ENCODE measurements at regions of chr12 and their contacts with region 1.

Region 1: GRCh38 chr12:69330475-69331473 is 17.4 kb upstream of the LYZ start:
- DNase-seq: peak; percentile 28 to 83 (median 76)
- ATAC-seq: peak; percentile 78
- H3K4me3 ChIP-seq: peak overlapping the region; percentile 83
- H3K4me3 Mint-ChIP-seq: peak overlapping the region; percentile 75 to 97 (median 96)
- H3K27ac ChIP-seq: peak overlapping the region; percentile 92
- H3K27ac Mint-ChIP-seq: peak overlapping the region; percentile 91 to 99 (median 96)
- H3K4me1 ChIP-seq: peaks cover 20 to 51% of the 10 kb centered on the region in 2 donors
- H3K4me1 Mint-ChIP-seq: peaks cover 10 to 76% (median 71%) of the 10 kb centered on the region in 7 donors
- H3K27me3 ChIP-seq: no peaks in the 10 kb centered on the region
- H3K27me3 Mint-ChIP-seq: peaks cover 0 to 20% (median 0%) of the 10 kb centered on the region in 5 donors

Region 2: DNA sequence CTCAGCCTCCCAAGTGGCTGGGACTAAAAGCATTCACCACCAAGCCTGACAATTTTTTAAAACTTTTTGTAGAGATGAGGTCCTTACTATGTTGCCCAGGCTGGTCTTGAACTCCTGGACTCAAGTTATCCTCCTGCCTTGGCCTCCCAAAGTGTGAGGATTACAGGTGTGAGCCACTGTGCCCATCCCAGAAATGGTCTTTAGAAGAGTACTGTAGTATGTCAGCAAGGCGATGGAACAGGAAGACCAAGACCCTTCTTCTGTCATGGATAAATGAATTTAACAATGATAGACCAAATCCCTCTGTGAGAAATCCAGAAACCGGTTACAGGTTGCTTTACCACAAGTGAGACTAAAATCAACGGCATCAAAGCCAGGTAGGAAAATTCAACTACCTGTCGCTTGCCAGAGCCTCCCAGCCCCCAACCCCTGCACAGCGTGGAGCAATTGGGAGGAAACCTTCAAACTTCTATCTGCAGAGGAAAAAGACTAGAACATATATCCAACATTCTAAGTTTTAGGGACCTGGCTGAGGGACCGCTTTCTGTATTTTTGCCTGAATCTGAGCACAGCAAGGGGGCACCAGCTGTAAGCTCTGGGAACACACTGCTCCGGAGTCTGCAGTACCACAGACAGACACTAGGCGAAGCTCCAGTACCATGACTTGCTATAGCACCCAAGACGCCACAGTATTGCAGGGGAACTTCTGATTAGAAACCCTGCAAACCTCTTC is 40.1 kb before region 1 on chr12:
- CTCF ChIA-PET with region 1: interaction called, 7 read pairs
- POLR2A ChIA-PET with region 1: interaction called, 10 read pairs
- intact Hi-C with region 1: loop called (anchors 1 to 2 kb)
- DNase-seq: peak; percentile 57 to 82 (median 75)
- ATAC-seq: peak; percentile 100
- H3K4me3 ChIP-seq: no peak overlapping the region
- H3K4me3 Mint-ChIP-seq: peak overlapping the region in 2 of 10 donors; percentile 14 to 37
- H3K27ac ChIP-seq: no peak overlapping the region
- H3K27ac Mint-ChIP-seq: peak overlapping the region in 1 of 9 donors; percentile 59
- H3K4me1 ChIP-seq: peaks cover 8% of the 10 kb centered on the region in 2 donors
- H3K4me1 Mint-ChIP-seq: peaks cover 6 to 36% (median 22%) of the 10 kb centered on the region in 7 donors
- H3K27me3 ChIP-seq: no peaks in the 10 kb centered on the region
- H3K27me3 Mint-ChIP-seq: peaks cover 0 to 49% (median 18%) of the 10 kb centered on the region in 5 donors

Region 3: GRCh38 chr12:69341328-69341727 is 10.6 kb after region 1 on chr12:
- CTCF ChIA-PET with region 1: interaction called, 4 read pairs
- POLR2A ChIA-PET with region 1: interaction called, 36 read pairs
- intact Hi-C with region 1: no loop called
- DNase-seq: no peak
- ATAC-seq: peak; percentile 79
- H3K4me3 ChIP-seq: no peak overlapping the region
- H3K4me3 Mint-ChIP-seq: no peak overlapping the region
- H3K27ac ChIP-seq: no peak overlapping the region
- H3K27ac Mint-ChIP-seq: no peak overlapping the region
- H3K4me1 ChIP-seq: no peaks in the 10 kb centered on the region
- H3K4me1 Mint-ChIP-seq: peaks cover 0 to 14% (median 2%) of the 10 kb centered on the region in 7 donors
- H3K27me3 ChIP-seq: no peaks in the 10 kb centered on the region
- H3K27me3 Mint-ChIP-seq: peaks cover 0 to 13% (median 7%) of the 10 kb centered on the region in 5 donors

Region 4: GRCh38 chr12:69348162-69348938 is 17.6 kb after region 1 on chr12 and contains the start of gene LYZ:
- CTCF ChIA-PET with region 1: interaction called, 4 read pairs
- POLR2A ChIA-PET with region 1: interaction called, 36 read pairs
- intact Hi-C with region 1: no loop called
- DNase-seq: no peak
- ATAC-seq: peak; percentile 89
- H3K4me3 ChIP-seq: no peak within 1 kb of the TSS
- H3K4me3 Mint-ChIP-seq: no peak within 1 kb of the TSS
- H3K27ac ChIP-seq: no peak within 1 kb of the TSS
- H3K27ac Mint-ChIP-seq: peak within 1 kb of the TSS in 1 of 9 donors; percentile 10
- H3K4me1 ChIP-seq: peaks cover 0 to 3% of the 10 kb centered on the region in 2 donors
- H3K4me1 Mint-ChIP-seq: peaks cover 0 to 7% (median 6%) of the 10 kb centered on the region in 7 donors
- H3K27me3 ChIP-seq: no peaks in the 10 kb centered on the region
- H3K27me3 Mint-ChIP-seq: peaks cover 0 to 17% (median 0%) of the 10 kb centered on the region in 5 donors
- total RNA-seq, gene LYZ: 1.1 to 2,445 (median 48.5) TPM

Region 5: DNA sequence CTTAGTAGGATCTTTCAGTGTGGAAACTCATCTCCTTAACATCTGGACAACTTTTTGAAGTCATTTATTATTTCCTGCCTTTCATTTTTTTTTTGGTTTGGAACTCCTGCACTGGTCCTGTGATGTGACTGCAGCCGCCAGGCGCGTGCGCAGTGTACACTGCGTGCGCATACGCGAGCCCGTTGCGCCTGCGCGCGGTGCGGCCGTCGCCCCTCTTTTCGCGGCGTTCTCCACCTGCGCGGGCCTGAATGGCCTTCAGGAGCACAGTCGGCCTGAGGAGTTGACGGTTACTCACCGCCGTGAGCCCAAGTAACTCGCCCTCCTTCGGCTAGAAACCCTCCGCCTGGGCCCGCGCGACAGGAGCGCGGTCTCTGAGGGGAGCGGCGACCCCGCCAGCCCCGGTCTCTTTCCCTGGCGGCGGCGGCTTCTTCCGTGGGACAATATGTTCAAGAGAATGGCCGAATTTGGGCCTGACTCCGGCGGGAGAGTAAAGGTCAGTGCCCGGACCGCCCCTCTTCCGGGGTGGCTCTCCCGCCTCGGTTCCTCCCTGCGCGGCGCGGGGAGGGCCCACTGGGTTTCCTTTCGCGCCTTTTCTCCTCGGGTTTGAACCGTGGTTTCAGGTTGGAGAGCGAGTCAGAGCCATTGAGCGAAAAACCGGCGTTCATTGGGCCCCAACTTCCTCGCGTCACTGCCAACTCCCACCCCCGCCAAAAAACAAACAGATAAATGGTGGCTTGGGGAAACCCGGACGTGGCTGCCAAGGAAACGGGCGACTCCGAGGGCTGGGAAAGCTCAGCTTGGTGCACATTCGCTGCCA is 29.0 kb after region 1 on chr12 and contains the start of gene YEATS4:
- CTCF ChIA-PET with region 1: interaction called, 14 read pairs
- POLR2A ChIA-PET with region 1: interaction called, 61 read pairs
- intact Hi-C with region 1: loop called in 1 of 2 experiments (anchors 1 kb)
- DNase-seq: peak; percentile 73 to 93 (median 84)
- ATAC-seq: peak; percentile 86
- H3K4me3 ChIP-seq: peak within 1 kb of the TSS; percentile 76
- H3K4me3 Mint-ChIP-seq: peak within 1 kb of the TSS; percentile 82 to 93 (median 89)
- H3K27ac ChIP-seq: peak within 1 kb of the TSS; percentile 93
- H3K27ac Mint-ChIP-seq: peak within 1 kb of the TSS; percentile 80 to 96 (median 91)
- H3K4me1 ChIP-seq: peaks cover 5 to 6% of the 10 kb centered on the region in 2 donors
- H3K4me1 Mint-ChIP-seq: peaks cover 11 to 32% (median 25%) of the 10 kb centered on the region in 7 donors
- H3K27me3 ChIP-seq: no peaks in the 10 kb centered on the region
- H3K27me3 Mint-ChIP-seq: peaks cover 0 to 3% (median 0%) of the 10 kb centered on the region in 5 donors
- total RNA-seq, gene YEATS4: 16.5 to 34.9 (median 21.4) TPM

Region 6: DNA sequence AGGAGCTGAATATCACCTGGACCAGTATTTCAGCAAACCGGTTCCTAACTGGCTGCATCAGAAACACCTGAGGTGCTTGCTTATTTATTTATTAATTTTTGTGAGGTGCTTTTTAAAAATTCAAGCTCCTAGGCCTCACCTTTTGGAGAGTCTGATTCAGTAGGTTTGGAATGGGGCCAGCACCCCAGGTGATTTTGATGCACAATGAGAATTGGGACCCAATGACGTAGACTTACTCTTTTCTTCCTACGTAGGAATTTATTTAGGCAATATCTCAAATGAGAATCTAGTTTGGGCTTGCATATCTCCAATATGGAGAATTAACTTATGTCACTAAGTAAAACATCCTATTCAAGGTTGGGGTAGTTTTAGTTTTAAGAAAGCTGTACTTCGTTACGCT is 36.0 kb after region 1 on chr12:
- CTCF ChIA-PET with region 1: no interaction called
- POLR2A ChIA-PET with region 1: interaction called, 13 read pairs
- intact Hi-C with region 1: no loop called
- DNase-seq: no peak
- ATAC-seq: no peak
- H3K4me3 ChIP-seq: no peak overlapping the region
- H3K4me3 Mint-ChIP-seq: no peak overlapping the region
- H3K27ac ChIP-seq: no peak overlapping the region
- H3K27ac Mint-ChIP-seq: no peak overlapping the region
- H3K4me1 ChIP-seq: no peaks in the 10 kb centered on the region
- H3K4me1 Mint-ChIP-seq: peaks cover 2 to 33% (median 15%) of the 10 kb centered on the region in 7 donors
- H3K27me3 ChIP-seq: no peaks in the 10 kb centered on the region
- H3K27me3 Mint-ChIP-seq: no peaks in the 10 kb centered on the region

Region 7: GRCh38 chr12:69470189-69471075 is 139.7 kb after region 1 on chr12 and contains the start of gene FRS2:
- CTCF ChIA-PET with region 1: no interaction called
- POLR2A ChIA-PET with region 1: interaction called, 23 read pairs
- intact Hi-C with region 1: no loop called
- DNase-seq: peak; percentile 66 to 87 (median 81)
- ATAC-seq: peak; percentile 99
- H3K4me3 ChIP-seq: peak within 1 kb of the TSS; percentile 80
- H3K4me3 Mint-ChIP-seq: peak within 1 kb of the TSS; percentile 91 to 100 (median 96)
- H3K27ac ChIP-seq: peak within 1 kb of the TSS; percentile 94
- H3K27ac Mint-ChIP-seq: peak within 1 kb of the TSS; percentile 91 to 99 (median 97)
- H3K4me1 ChIP-seq: peaks cover 11 to 12% of the 10 kb centered on the region in 2 donors
- H3K4me1 Mint-ChIP-seq: peaks cover 41 to 60% (median 51%) of the 10 kb centered on the region in 7 donors
- H3K27me3 ChIP-seq: no peaks in the 10 kb centered on the region
- H3K27me3 Mint-ChIP-seq: no peaks in the 10 kb centered on the region
- total RNA-seq, gene FRS2: 17.5 to 30.1 (median 24.0) TPM

Measured in naive thymus-derived CD4-positive, alpha-beta T cell (primary cell).